Heart left ventricle (tissue), 16 donors: ENCODE measurements at regions of chr3 and their contacts with region 1.

Region 1: DNA sequence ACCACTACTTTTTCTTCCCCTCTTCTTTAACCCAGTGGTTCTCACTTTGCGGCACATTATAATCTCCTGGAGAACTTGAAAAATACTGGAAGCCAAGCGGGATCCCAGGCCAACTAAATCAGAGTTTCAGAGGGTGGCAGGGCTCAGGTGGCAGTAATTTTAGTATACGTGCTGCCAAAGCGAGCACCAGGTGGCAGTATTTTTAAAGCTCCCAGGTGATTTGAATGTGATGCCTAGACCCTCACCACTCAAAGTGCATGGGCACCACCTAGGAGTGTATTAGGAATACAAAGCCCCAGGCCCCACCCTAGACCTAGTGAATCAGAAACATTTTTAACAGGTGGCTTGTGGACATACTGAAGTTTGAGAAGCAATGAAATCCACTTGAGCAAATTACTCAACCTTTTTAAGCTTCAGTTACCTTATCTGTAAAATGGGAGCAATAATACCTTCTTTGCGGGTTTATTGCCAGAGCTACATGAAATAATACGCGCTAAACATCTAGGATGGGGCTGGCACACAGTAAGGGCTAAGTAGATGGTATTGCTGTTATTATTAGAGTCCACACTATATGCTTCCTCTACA is 8.3 kb downstream of the B3GALNT1 start:
- DNase-seq: no peak
- ATAC-seq: peak in 3 of 4 donors; percentile 7 to 19 (median 8)
- H3K4me3 ChIP-seq: no peak overlapping the region
- H3K27ac ChIP-seq: peak overlapping the region in 3 of 12 donors; percentile 3 to 42 (median 4)
- H3K4me1 ChIP-seq: peaks cover 0 to 58% (median 4%) of the 10 kb centered on the region in 12 donors
- H3K27me3 ChIP-seq: no peaks in the 10 kb centered on the region
- CTCF ChIP-seq: peak in 11 of 12 donors; percentile 12 to 52 (median 33)
- POLR2A ChIP-seq: no peak

Region 2: DNA sequence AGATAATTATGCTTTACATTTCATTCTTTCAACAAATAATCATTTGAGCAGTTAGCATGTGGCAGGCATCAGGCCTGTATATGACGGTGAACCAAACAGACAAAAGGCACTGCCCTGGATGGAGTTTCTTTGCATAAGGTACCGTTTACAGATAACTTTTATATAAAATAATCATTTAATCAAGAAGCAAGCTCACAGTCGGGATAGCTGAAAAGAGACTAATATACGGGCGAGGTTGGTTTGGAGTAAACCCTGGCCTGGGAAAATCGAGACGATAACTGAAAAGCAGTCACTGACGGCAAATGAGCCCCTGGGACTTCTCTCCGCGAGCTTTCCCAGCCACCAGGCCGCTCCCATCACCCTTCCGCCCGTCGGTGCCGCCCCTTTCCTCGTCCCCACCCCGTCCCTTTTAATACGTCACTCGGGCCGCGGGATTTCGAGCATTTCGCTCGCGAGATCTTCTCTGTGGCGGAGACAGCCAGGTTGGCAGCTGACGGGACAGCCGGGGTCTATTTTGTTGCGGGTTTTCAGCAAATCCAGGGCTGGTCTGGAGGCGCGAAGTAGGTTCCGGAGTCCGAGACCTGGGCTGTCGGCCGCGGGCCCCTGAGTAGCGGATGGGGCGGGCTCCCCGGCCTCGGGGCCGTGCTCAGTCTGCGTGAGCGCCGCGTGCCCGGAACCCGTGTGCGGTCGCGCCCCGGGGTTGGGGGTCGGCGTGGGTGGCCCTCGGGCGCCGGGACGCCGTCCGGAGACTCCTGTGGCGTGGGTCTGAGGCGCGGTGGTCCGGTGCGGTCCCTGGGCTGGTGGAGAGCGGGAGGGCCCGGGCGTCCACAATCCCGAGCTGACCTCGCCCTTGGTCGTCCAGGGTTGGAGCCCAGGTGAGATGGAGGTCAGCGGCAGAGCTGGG is 124.2 kb after region 1 on chr3 and contains the start of gene NMD3:
- intact Hi-C with region 1: loop called in 5 of 10 experiments (anchors 5 to 10 kb)
- DNase-seq: peak; percentile 96 to 97 (median 97)
- ATAC-seq: peak; percentile 97 to 98 (median 98)
- H3K4me3 ChIP-seq: peak within 1 kb of the TSS; percentile 66 to 96 (median 80)
- H3K27ac ChIP-seq: peak within 1 kb of the TSS; percentile 82 to 99 (median 91)
- H3K4me1 ChIP-seq: peaks cover 6 to 49% (median 35%) of the 10 kb centered on the region in 12 donors
- H3K27me3 ChIP-seq: no peaks in the 10 kb centered on the region
- CTCF ChIP-seq: peak in 1 of 12 donors; percentile 1
- POLR2A ChIP-seq: peak; percentile 79 to 92
- total RNA-seq, gene NMD3: 28.9 to 74.9 (median 57.6) TPM

Region 3: GRCh38 chr3:161253711-161254110 is 156.8 kb after region 1 on chr3:
- intact Hi-C with region 1: loop called in 1 of 10 experiments (anchors 5 kb)
- DNase-seq: no peak
- ATAC-seq: peak in 2 of 4 donors; percentile 14 to 18
- H3K4me3 ChIP-seq: no peak overlapping the region
- H3K27ac ChIP-seq: peak overlapping the region in 1 of 12 donors; percentile 4
- H3K4me1 ChIP-seq: peaks cover 0 to 26% (median 13%) of the 10 kb centered on the region in 12 donors
- H3K27me3 ChIP-seq: no peaks in the 10 kb centered on the region
- CTCF ChIP-seq: no peak
- POLR2A ChIP-seq: no peak